ENCODE measurements at regions of chr13 and their contacts with region 1.

Region 1: DNA sequence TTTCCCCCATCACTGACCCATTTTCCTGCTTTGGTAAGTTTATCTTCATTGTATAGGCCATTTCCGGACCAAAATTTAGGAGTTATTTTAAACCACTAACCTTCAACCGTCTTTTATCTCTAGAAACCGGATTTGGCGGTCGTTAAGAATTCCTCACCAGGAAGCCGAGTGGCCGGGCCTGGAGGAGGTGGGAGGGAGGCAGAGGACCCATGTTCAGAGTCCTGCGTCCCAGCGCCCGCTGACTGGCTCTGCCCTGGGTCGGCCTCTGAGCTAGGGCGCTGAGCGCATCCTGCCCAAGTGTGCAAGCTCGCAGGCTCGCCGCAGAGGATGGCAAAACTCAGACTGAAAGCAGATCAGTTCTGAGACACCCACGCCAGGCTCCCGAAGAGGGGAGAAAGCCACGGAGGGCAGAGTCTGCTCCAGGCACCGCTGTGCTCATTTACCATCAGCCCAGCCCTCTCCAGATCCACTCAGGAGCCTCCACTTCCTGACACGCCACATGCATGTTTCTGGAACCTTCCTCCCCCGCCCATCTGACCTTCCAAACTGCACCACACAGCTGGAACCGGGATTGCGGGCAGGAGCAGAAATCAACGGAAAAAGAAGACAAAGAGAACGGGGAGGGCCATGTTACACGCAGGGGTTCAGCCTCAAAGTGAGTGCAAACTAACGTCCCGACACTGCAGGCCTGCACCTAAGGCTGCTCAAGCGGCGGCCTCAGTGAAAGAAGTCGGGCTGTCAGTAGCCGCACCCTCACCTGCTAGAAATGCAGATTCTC is 8.3 kb downstream of the COL4A1 start:
- DNase-seq: no peak
- ATAC-seq: no peak
- H3K4me3 ChIP-seq: peak overlapping the region; percentile 3 to 27 (median 9)
- H3K27ac ChIP-seq: peak overlapping the region; percentile 33 to 84 (median 54)
- H3K4me1 ChIP-seq: peaks cover 5 to 21% of the 10 kb centered on the region in 2 donors
- H3K27me3 ChIP-seq: peaks cover 0 to 16% (median 4%) of the 10 kb centered on the region in 3 donors
- CTCF ChIP-seq: no peak
- POLR2A ChIP-seq: no peak

Region 2: GRCh38 chr13:110225609-110226562 is 72.8 kb before region 1 on chr13:
- in situ Hi-C with region 1: no loop called
- intact Hi-C with region 1: loop called (anchors 5 kb)
- DNase-seq: no peak
- ATAC-seq: no peak
- H3K4me3 ChIP-seq: no peak overlapping the region
- H3K27ac ChIP-seq: peak overlapping the region; percentile 41 to 69 (median 55)
- H3K4me1 ChIP-seq: peaks cover 11 to 16% of the 10 kb centered on the region in 2 donors
- H3K27me3 ChIP-seq: no peaks in the 10 kb centered on the region
- CTCF ChIP-seq: no peak
- POLR2A ChIP-seq: no peak

Region 3: GRCh38 chr13:110239280-110240125 is 59.2 kb before region 1 on chr13:
- in situ Hi-C with region 1: loop called in 1 of 4 experiments (anchors 5 kb)
- intact Hi-C with region 1: no loop called
- DNase-seq: no peak
- ATAC-seq: no peak
- H3K4me3 ChIP-seq: no peak overlapping the region
- H3K27ac ChIP-seq: peak overlapping the region; percentile 48 to 71 (median 62)
- H3K4me1 ChIP-seq: peaks cover 38 to 40% of the 10 kb centered on the region in 2 donors
- H3K27me3 ChIP-seq: no peaks in the 10 kb centered on the region
- CTCF ChIP-seq: no peak
- POLR2A ChIP-seq: no peak

Region 4: DNA sequence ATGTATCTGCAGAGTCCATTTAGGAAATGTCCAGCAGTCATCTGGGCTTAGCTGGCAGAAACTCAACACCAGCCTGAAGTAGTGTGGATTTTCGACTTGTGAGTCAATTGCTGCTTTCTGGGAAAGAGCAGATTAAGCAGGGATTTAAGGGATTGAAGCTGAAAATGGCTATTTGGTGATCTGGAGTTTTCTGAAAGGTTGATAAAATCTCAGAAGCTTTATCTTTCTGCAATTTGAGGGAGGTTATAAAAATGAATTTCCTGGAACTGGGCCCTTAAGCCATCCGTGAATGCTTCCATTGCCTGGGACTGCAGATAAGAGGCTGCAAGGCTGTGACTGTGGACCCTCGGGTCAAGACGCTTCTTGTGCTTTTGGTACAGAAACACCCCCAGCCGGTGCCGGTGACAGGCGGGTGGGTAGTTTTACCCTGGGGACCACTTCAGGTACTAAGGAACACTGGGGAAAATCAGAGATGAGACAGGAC is 53.2 kb before region 1 on chr13:
- in situ Hi-C with region 1: no loop called
- intact Hi-C with region 1: loop called (anchors 5 kb)
- DNase-seq: no peak
- ATAC-seq: no peak
- H3K4me3 ChIP-seq: no peak overlapping the region
- H3K27ac ChIP-seq: peak overlapping the region; percentile 49 to 81 (median 79)
- H3K4me1 ChIP-seq: peaks cover 23 to 38% of the 10 kb centered on the region in 2 donors
- H3K27me3 ChIP-seq: peaks cover 0 to 2% (median 0%) of the 10 kb centered on the region in 3 donors
- CTCF ChIP-seq: no peak
- POLR2A ChIP-seq: no peak

Region 5: DNA sequence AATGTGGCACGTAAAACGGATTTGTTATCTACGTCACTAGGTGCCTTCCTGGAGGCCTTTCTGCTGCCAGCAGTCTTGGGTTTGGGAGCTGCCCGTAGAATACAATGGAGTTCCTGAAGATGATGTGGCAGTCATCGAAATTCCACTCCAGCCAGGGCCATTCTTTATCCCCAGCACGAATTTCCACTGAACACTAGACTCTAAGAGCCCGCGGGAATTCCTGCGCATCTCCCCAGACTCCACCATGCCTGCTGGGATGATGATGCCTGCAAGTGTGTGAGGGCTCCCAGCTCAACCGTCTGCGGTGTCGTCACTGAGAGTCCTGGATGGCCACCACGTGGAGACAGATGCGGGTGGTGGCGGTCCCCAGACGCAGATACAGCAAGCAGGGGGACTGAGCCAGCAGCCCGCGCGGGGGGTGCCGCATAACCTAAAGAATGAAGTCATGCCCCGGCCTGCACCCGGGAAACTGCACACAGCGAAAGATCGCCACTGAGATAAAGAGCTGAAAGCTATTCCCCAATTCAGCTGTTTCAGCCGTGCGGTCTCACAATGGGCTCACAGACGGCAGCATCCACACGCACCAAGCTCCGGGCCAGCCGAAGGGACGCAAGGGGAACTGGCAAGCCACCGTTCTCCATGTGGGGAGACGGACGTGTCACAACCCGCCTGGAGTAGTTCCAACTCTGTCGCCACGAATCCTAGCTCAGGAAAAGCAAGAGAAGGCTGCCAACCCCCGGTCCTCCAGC is 32.8 kb before region 1 on chr13:
- in situ Hi-C with region 1: no loop called
- intact Hi-C with region 1: loop called (anchors 5 kb)
- DNase-seq: peak; percentile 34 to 63
- ATAC-seq: peak; percentile 15 to 20
- H3K4me3 ChIP-seq: peak overlapping the region in 3 of 4 donors; percentile 21 to 32 (median 24)
- H3K27ac ChIP-seq: peak overlapping the region; percentile 49 to 70 (median 68)
- H3K4me1 ChIP-seq: peaks cover 54 to 62% of the 10 kb centered on the region in 2 donors
- H3K27me3 ChIP-seq: peaks cover 0 to 21% (median 10%) of the 10 kb centered on the region in 3 donors
- CTCF ChIP-seq: no peak
- POLR2A ChIP-seq: no peak

Measured in gastrocnemius medialis (tissue), 4 donors.